ENCODE measurements at regions of chr1 and their contacts with region 1.

Region 1: GRCh38 chr1:203702130-203702577 is 62.8 kb upstream of the LAX1 start:
- DNase-seq: peak; percentile 69
- H3K4me3 Mint-ChIP-seq: no peak overlapping the region
- H3K27ac Mint-ChIP-seq: peak overlapping the region; percentile 75
- H3K4me1 Mint-ChIP-seq: peaks cover 2% of the 10 kb centered on the region
- H3K27me3 Mint-ChIP-seq: no peaks in the 10 kb centered on the region

Region 2: DNA sequence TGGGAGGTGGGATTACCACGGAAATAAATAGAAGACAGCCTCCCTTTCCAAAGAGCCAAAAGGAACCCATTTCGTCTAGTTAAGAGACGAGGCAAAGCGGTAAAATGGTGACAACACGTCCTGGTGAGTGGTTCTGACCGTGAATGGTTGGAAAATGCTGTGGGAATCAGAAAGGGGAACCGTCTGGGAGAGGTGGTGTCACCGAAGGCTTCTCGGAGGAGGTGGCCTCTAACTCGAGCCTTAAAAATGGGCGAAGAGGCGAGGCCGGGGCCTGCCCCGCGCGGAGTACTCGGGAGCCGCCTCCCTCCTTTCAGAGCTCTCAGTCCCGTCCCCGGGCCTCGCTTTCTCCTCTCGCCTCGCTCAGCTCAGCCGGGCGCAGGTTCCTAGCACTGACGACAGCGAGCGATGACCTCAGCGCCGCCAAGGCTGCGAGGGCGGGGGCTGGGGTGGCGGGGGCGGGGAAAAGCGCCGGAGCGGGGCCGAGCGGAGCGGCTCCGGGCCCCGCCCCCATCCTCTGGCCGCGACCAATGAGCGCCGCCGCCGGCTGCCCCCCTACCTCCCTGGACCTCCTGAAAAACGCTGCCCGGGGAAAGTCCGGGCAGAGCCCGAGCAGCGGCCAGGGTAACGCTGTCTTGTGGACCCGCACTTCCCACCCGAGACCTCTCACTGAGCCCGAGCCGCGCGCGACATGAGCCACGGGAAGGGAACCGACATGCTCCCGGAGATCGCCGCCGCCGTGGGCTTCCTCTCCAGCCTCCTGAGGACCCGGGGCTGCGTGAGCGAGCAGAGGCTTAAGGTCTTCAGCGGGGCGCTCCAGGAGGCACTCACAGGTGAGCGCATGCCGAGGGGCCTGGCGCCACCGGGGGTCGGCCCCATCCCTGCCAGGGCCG is 397.0 kb before region 1 on chr1 and contains the start of gene BTG2:
- CTCF ChIA-PET with region 1: no interaction called
- POLR2A ChIA-PET with region 1: no interaction called
- intact Hi-C with region 1: no loop called
- DNase-seq: peak; percentile 95
- H3K4me3 Mint-ChIP-seq: peak within 1 kb of the TSS; percentile 92
- H3K27ac Mint-ChIP-seq: peak within 1 kb of the TSS; percentile 98
- H3K4me1 Mint-ChIP-seq: peaks cover 51% of the 10 kb centered on the region
- H3K27me3 Mint-ChIP-seq: no peaks in the 10 kb centered on the region
- total RNA-seq, gene BTG2: 150 TPM

Region 3: GRCh38 chr1:203504397-203505250 is 197.5 kb before region 1 on chr1:
- CTCF ChIA-PET with region 1: interaction called, 179 read pairs
- POLR2A ChIA-PET with region 1: interaction called, 3 read pairs
- intact Hi-C with region 1: loop called (anchors 1 kb)
- DNase-seq: peak; percentile 84
- H3K4me3 Mint-ChIP-seq: no peak overlapping the region
- H3K27ac Mint-ChIP-seq: no peak overlapping the region
- H3K4me1 Mint-ChIP-seq: no peaks in the 10 kb centered on the region
- H3K27me3 Mint-ChIP-seq: peaks cover 2% of the 10 kb centered on the region

Region 4: DNA sequence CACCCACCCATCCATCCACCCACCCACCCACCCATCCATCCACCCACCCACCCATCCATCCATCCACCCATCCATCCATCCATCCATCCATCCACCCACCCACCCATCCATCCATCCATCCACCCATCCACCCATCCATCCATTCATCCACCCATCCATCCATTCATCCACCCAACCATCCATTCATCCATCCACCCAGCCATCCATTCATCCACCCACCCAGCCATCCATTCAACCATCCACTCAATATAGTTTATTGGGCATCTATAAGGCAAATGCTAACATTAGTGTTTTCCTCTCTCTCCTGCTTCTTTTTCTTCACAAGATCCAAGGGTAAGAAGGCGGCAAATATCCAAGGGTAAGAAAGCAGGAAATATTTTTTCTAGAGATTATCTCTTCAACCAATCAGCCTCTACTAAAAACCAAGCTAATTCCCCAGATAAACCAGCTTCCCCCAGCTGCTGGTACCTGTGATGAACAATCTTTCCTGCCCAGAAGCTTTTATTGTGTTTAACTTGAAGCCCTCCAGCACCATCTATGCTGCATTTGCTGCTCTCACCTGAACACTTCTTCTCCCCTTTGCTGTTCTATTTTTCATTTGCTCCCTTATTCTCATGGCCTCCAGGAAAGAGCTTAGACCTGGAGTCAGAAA is 98.1 kb before region 1 on chr1:
- CTCF ChIA-PET with region 1: interaction called, 11 read pairs
- POLR2A ChIA-PET with region 1: interaction called, 4 read pairs
- intact Hi-C with region 1: no loop called
- DNase-seq: no peak
- H3K4me3 Mint-ChIP-seq: no peak overlapping the region
- H3K27ac Mint-ChIP-seq: no peak overlapping the region
- H3K4me1 Mint-ChIP-seq: peaks cover 39% of the 10 kb centered on the region
- H3K27me3 Mint-ChIP-seq: no peaks in the 10 kb centered on the region

Region 5: DNA sequence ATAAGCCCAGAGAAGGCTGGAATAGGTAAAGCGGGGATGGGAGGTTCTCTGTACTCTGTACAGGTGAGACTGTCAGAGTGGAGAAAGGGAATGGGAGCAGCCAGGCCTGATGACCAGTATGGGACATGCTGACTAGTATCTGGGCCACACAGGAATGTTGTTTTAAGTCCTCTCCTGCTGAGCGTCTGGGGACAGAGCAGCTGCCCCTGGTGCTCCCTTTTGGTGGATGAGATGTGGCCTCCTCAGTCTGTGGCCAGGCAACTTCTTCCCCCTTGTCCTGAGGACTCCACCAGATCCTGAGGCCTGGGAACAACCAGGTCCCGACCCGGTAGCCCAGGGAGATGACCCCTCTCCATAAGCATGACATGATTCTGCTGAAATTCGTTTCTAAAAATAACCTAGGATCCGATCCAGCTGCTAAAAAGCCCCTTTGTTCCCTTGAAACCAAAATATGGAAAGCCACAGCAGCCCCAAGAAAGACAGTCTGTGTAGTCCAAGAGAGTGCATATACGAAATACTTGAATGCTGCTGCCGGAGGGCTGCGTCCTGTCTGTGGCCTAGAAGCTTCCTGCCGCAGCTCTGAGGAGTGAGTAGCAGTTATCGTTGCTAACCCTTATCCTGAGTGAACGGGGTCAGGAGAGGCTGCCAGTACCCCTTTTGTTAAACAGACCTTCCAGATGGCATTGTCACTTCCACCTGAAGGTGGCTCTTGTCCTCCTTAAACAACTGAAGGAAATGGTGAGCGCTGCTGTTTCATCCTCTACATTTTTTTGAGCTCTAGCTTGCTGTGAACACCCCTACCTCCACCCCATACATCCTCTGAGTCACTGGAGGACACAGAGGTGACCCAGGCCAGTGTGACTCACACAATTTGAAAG is 28.4 kb before region 1 on chr1:
- CTCF ChIA-PET with region 1: interaction called, 26 read pairs
- POLR2A ChIA-PET with region 1: no interaction called
- intact Hi-C with region 1: loop called (anchors 1 kb)
- DNase-seq: peak; percentile 84
- H3K4me3 Mint-ChIP-seq: peak overlapping the region; percentile 46
- H3K27ac Mint-ChIP-seq: peak overlapping the region; percentile 90
- H3K4me1 Mint-ChIP-seq: peaks cover 62% of the 10 kb centered on the region
- H3K27me3 Mint-ChIP-seq: no peaks in the 10 kb centered on the region

Region 6: GRCh38 chr1:203930331-203930730 is 228.2 kb after region 1 on chr1:
- CTCF ChIA-PET with region 1: no interaction called
- POLR2A ChIA-PET with region 1: no interaction called
- intact Hi-C with region 1: no loop called
- DNase-seq: no peak
- H3K4me3 Mint-ChIP-seq: no peak overlapping the region
- H3K27ac Mint-ChIP-seq: no peak overlapping the region
- H3K4me1 Mint-ChIP-seq: peaks cover 5% of the 10 kb centered on the region
- H3K27me3 Mint-ChIP-seq: peaks cover 2% of the 10 kb centered on the region

Measured in activated CD4-positive, alpha-beta memory T cell treated with anti-CD3 and anti-CD28 coated beads for 36 hours (primary cell).